CD8-positive, alpha-beta T cell (primary cell): ENCODE measurements at regions of chr6 and their contacts with region 1.

Region 1: DNA sequence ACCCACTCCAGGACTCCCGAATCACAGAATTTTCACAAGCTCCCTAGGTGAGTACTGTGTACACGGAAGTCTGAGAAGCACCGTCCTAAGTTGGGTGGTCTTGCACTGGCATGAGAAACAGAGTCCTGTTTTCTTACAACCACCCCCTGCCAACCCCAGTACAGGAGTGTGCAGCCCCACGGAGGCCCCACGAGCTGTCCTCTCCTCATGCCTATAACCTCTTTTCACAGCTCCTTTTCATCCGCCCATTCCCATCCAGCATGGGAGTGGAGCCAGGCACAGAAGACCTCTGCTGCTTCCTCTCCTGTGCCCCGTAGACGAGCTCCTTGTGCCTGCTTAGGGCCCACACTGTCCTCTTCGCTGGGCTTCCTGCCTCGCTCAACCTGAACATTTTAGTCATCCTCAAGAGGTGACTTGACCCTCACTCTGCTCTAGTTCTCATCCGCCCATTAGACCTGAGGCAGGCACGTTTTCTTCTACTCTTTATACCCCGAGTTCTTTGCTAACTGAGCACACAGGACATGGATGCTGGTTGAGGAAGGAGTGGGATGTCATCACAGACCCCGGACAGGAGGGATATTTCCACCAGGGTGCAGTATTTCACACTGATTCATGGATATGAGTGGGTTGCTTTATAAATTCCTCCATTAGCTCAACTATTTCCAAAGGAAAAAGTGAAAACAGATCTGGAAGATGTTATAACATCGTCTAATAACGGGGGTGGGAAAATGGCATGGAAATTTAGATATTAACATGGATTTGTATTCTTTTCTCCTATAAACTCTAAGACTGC is 160.5 kb downstream of the TTLL2 start:
- DNase-seq: no peak
- ATAC-seq: no peak
- H3K4me3 ChIP-seq: no peak overlapping the region
- H3K4me3 Mint-ChIP-seq: no peak overlapping the region
- H3K27ac ChIP-seq: no peak overlapping the region
- H3K27ac Mint-ChIP-seq: no peak overlapping the region
- H3K4me1 ChIP-seq: no peaks in the 10 kb centered on the region
- H3K4me1 Mint-ChIP-seq: no peaks in the 10 kb centered on the region
- H3K27me3 ChIP-seq: no peaks in the 10 kb centered on the region
- H3K27me3 Mint-ChIP-seq: peaks cover 19% of the 10 kb centered on the region
- CTCF ChIP-seq: no peak

Region 2: GRCh38 chr6:166156942-166157341 is 1328.4 kb before region 1 on chr6:
- CTCF ChIA-PET with region 1: no interaction called
- POLR2A ChIA-PET with region 1: no interaction called
- intact Hi-C with region 1: no loop called
- DNase-seq: no peak
- ATAC-seq: no peak
- H3K4me3 ChIP-seq: no peak overlapping the region
- H3K4me3 Mint-ChIP-seq: no peak overlapping the region
- H3K27ac ChIP-seq: no peak overlapping the region
- H3K27ac Mint-ChIP-seq: no peak overlapping the region
- H3K4me1 ChIP-seq: no peaks in the 10 kb centered on the region
- H3K4me1 Mint-ChIP-seq: no peaks in the 10 kb centered on the region
- H3K27me3 ChIP-seq: no peaks in the 10 kb centered on the region
- H3K27me3 Mint-ChIP-seq: peaks cover 14% of the 10 kb centered on the region
- CTCF ChIP-seq: no peak

Region 3: GRCh38 chr6:167898673-167899311 is 413.4 kb after region 1 on chr6:
- CTCF ChIA-PET with region 1: no interaction called
- POLR2A ChIA-PET with region 1: no interaction called
- intact Hi-C with region 1: loop called in 1 of 2 experiments (anchors 5 kb)
- DNase-seq: peak in 2 of 9 experiments; percentile 7 to 8
- ATAC-seq: no peak
- H3K4me3 ChIP-seq: no peak overlapping the region
- H3K4me3 Mint-ChIP-seq: no peak overlapping the region
- H3K27ac ChIP-seq: no peak overlapping the region
- H3K27ac Mint-ChIP-seq: no peak overlapping the region
- H3K4me1 ChIP-seq: no peaks in the 10 kb centered on the region
- H3K4me1 Mint-ChIP-seq: no peaks in the 10 kb centered on the region
- H3K27me3 ChIP-seq: no peaks in the 10 kb centered on the region
- H3K27me3 Mint-ChIP-seq: peaks cover 2% of the 10 kb centered on the region
- CTCF ChIP-seq: peak; percentile 55